B cell (primary cell): ENCODE measurements at regions of chr1 and their contacts with region 1.

Region 1: DNA sequence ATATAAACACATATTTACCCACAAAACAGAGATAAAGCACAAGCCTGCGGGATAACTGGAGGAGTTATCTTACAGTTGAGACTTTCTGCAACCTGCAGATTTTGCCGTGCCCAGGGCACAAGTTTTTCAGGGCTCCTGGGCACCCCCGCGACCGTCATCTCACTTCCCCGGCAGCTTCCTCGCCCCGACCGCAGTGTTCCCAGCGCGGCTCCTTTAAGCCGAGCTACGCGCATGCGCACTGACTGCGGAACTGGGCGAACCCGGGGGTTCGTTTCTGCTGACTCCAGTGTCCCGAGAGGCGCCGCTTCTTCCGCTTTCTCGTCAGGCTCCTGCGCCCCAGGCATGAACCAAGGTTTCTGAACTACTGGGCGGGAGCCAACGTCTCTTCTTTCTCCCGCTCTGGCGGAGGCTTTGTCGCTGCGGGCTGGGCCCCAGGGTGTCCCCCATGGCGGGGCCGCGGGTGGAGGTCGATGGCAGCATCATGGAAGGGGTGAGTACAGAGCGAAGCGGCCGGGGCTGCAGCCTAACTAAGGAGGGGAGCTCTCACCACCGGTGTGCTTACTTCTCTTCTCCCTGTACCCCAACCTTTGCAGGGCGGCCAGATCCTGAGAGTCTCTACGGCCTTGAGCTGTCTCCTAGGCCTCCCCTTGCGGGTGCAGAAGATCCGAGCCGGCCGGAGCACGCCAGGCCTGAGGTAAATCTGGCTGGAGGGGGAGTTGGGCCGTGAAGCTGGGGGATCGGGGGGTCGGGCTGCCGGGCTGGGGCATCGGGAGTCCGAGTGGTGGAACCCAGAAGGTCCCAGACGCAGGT is at the start of gene RTCA:
- DNase-seq: peak; percentile 96
- ATAC-seq: peak; percentile 95
- H3K4me3 ChIP-seq: peak within 1 kb of the TSS; percentile 74 to 98 (median 94)
- H3K4me3 Mint-ChIP-seq: peak within 1 kb of the TSS; percentile 100
- H3K27ac ChIP-seq: peak within 1 kb of the TSS; percentile 58 to 81
- H3K27ac Mint-ChIP-seq: peak within 1 kb of the TSS; percentile 98
- H3K4me1 ChIP-seq: peaks cover 15 to 21% of the 10 kb centered on the region in 2 donors
- H3K4me1 Mint-ChIP-seq: peaks cover 38% of the 10 kb centered on the region
- H3K27me3 ChIP-seq: no peaks in the 10 kb centered on the region
- H3K27me3 Mint-ChIP-seq: no peaks in the 10 kb centered on the region
- CTCF ChIP-seq: no peak
- total RNA-seq, gene RTCA: 31.0 and 40.2 TPM in 2 replicates

Region 2: GRCh38 chr1:98884864-98885263 is 1381.3 kb before region 1 on chr1:
- CTCF ChIA-PET with region 1: no interaction called
- POLR2A ChIA-PET with region 1: no interaction called
- intact Hi-C with region 1: no loop called
- DNase-seq: no peak
- ATAC-seq: no peak
- H3K4me3 ChIP-seq: no peak overlapping the region
- H3K4me3 Mint-ChIP-seq: no peak overlapping the region
- H3K27ac ChIP-seq: no peak overlapping the region
- H3K27ac Mint-ChIP-seq: no peak overlapping the region
- H3K4me1 ChIP-seq: no peaks in the 10 kb centered on the region
- H3K4me1 Mint-ChIP-seq: no peaks in the 10 kb centered on the region
- H3K27me3 ChIP-seq: no peaks in the 10 kb centered on the region
- H3K27me3 Mint-ChIP-seq: peaks cover 8% of the 10 kb centered on the region
- CTCF ChIP-seq: no peak

Region 3: DNA sequence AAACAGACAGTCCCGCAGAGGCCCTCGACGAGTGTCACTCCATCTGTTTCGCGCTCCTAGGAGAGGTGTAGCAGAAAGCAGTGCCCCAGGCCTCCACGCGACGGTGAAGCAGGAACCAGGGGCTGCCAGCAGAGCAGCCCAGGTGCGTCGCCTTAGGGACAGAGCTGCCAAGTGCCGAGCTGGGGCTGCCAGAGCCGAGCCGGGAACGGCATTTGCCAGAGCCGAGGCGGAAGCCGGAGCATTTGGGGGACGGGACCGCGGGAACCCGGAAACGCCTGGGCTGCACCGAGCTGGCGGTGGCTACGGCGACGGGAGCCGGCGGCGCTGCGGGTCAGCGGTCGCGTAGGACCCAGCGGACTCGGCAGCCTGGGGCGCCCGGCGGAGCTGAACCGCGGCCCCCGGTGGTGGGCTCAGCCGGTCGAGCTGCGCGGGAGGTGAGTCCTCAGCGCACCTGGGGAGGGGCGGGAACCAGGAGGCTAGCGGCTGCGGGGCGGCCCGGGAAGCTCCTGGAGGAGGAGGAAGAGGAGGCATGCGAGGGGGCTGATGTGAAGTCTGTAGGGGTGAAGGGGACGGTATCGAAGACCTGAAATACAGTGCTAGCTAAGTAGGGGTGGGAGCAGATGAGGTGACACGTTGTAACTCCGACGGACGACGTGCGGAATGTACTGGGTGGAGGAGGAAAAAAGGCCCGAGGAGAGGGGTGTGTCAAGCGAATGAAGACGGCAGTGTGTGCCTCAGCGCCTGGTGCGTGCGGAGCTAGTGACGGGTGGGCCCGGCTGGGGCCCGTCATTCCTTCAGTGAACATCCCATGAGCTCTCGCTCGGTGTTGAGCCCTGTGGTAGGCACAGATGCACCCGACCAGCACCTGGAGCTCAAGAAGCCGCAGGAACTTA is 296.2 kb before region 1 on chr1 and contains the start of gene SLC35A3:
- CTCF ChIA-PET with region 1: no interaction called
- POLR2A ChIA-PET with region 1: interaction called, 5 read pairs
- intact Hi-C with region 1: loop called (anchors 10 kb)
- DNase-seq: peak; percentile 82
- ATAC-seq: peak; percentile 75
- H3K4me3 ChIP-seq: peak within 1 kb of the TSS; percentile 66 to 89 (median 82)
- H3K4me3 Mint-ChIP-seq: peak within 1 kb of the TSS; percentile 100
- H3K27ac ChIP-seq: peak within 1 kb of the TSS; percentile 54 to 84
- H3K27ac Mint-ChIP-seq: peak within 1 kb of the TSS; percentile 95
- H3K4me1 ChIP-seq: peaks cover 10% of the 10 kb centered on the region in 2 donors
- H3K4me1 Mint-ChIP-seq: peaks cover 31% of the 10 kb centered on the region
- H3K27me3 ChIP-seq: no peaks in the 10 kb centered on the region
- H3K27me3 Mint-ChIP-seq: no peaks in the 10 kb centered on the region
- CTCF ChIP-seq: no peak
- total RNA-seq, gene SLC35A3: 30.2 and 31.0 TPM in 2 replicates

Region 4: GRCh38 chr1:99992760-99993467 is 273.2 kb before region 1 on chr1:
- CTCF ChIA-PET with region 1: no interaction called
- POLR2A ChIA-PET with region 1: no interaction called
- intact Hi-C with region 1: no loop called
- DNase-seq: no peak
- ATAC-seq: no peak
- H3K4me3 ChIP-seq: no peak overlapping the region
- H3K4me3 Mint-ChIP-seq: no peak overlapping the region
- H3K27ac ChIP-seq: no peak overlapping the region
- H3K27ac Mint-ChIP-seq: no peak overlapping the region
- H3K4me1 ChIP-seq: no peaks in the 10 kb centered on the region
- H3K4me1 Mint-ChIP-seq: no peaks in the 10 kb centered on the region
- H3K27me3 ChIP-seq: no peaks in the 10 kb centered on the region
- H3K27me3 Mint-ChIP-seq: no peaks in the 10 kb centered on the region
- CTCF ChIP-seq: no peak

Region 5: GRCh38 chr1:100249537-100250257 is 16.4 kb before region 1 on chr1 and contains the start of gene DBT:
- CTCF ChIA-PET with region 1: interaction called, 4 read pairs
- POLR2A ChIA-PET with region 1: interaction called, 8 read pairs
- intact Hi-C with region 1: loop called (anchors 1 kb)
- DNase-seq: peak; percentile 90
- ATAC-seq: peak; percentile 100
- H3K4me3 ChIP-seq: peak within 1 kb of the TSS; percentile 61 to 99 (median 90)
- H3K4me3 Mint-ChIP-seq: no peak within 1 kb of the TSS
- H3K27ac ChIP-seq: peak within 1 kb of the TSS; percentile 68 to 69
- H3K27ac Mint-ChIP-seq: no peak within 1 kb of the TSS
- H3K4me1 ChIP-seq: peaks cover 12 to 15% of the 10 kb centered on the region in 2 donors
- H3K4me1 Mint-ChIP-seq: peaks cover 13% of the 10 kb centered on the region
- H3K27me3 ChIP-seq: no peaks in the 10 kb centered on the region
- H3K27me3 Mint-ChIP-seq: no peaks in the 10 kb centered on the region
- CTCF ChIP-seq: no peak
- total RNA-seq, gene DBT: 12.9 and 15.1 TPM in 2 replicates

Region 6: DNA sequence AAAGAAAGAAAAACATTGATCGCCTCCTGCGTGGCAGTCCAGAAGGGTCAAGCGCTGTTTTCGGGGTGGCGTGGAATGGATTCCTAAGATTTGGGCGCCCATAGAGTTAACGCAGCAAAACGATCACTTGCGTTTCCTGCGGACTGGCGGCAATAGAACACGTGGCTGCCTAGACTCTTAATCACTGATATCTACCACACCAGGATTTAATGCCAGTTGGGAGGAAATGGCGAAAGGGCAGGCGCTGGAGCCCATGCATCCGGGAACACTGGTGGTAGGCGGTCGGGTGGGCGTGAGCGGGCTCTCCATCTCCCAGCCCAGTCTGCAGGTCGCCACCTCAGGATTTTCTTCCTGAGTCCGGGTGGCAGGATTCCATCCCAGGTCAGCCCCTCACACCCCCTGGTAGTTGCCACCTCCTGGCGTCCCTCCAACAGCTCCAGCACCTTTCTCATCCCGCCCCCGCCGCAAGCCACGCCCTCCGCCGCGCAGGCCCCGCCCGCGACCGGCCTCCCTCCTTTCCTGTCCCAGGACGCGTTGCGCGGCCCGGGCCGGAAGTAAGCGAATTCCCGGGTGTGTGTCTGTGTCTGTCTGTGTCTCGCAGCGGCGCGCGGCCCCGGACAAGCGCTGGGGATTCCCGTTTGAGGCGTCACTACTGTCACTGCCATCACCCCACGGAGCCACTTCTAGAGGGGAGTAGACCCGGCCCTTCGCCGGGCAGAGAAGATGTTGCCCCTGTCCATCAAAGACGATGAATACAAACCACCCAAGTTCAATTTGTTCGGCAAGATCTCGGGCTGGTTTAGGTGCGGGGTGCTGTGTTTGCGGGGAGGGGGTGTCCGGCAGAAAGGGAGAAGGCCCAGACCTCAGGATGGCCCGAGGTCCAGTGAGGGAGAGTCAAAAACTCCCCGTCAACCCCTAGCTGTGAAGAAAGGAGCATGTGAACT is 629.7 kb after region 1 on chr1 and contains the start of gene SLC30A7:
- CTCF ChIA-PET with region 1: no interaction called
- POLR2A ChIA-PET with region 1: no interaction called
- intact Hi-C with region 1: loop called (anchors 10 kb)
- DNase-seq: peak; percentile 95
- ATAC-seq: peak; percentile 87
- H3K4me3 ChIP-seq: peak within 1 kb of the TSS; percentile 75 to 99 (median 98)
- H3K4me3 Mint-ChIP-seq: peak within 1 kb of the TSS; percentile 94
- H3K27ac ChIP-seq: peak within 1 kb of the TSS; percentile 85 to 97
- H3K27ac Mint-ChIP-seq: peak within 1 kb of the TSS; percentile 94
- H3K4me1 ChIP-seq: peaks cover 10 to 11% of the 10 kb centered on the region in 2 donors
- H3K4me1 Mint-ChIP-seq: peaks cover 32% of the 10 kb centered on the region
- H3K27me3 ChIP-seq: no peaks in the 10 kb centered on the region
- H3K27me3 Mint-ChIP-seq: no peaks in the 10 kb centered on the region
- CTCF ChIP-seq: no peak
- total RNA-seq, gene SLC30A7: 26.7 and 28.6 TPM in 2 replicates